Right cardiac atrium (tissue), 5 donors: ENCODE measurements at regions of chr16 and their contacts with region 1.

Region 1: DNA sequence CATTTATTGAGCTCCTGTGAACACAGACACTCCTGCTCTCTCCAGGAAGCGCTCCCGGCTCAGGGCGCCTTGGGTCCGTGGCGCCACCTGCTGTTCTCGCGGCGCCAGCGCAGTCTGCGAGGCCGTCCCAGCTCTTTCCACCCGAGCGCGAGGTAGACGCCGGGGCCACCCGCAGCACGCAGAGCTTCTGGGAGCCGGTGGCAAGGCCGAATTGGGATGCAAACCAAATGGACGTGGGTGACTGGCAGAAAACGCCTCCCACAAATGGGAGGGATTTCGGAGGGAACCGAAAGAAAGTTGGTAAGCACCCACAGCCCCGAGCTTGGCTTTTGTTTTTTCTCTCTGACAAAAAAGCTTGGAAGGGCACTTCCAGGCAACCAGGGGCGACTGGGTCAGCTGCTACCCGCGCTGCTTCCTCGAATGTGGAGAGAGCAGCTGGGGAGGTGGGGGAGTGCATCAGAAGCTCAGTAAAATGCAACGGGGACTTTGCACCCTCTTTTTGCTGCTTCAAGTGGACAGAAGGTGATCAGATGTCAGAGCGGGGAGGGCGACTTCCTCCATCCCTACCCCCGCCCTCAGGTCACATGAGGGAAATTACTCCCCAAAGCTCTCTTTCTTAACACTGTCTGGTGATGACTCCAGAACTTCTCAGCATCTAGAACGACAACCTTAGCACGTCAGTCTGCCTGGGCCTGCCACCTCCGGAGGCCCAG is 13.5 kb upstream of the N4BP1 start:
- DNase-seq: peak; percentile 83 to 94 (median 93)
- ATAC-seq: peak; percentile 95 to 96
- H3K4me3 ChIP-seq: peak overlapping the region; percentile 45
- H3K27ac ChIP-seq: peak overlapping the region; percentile 55
- H3K4me1 ChIP-seq: peaks cover 2% of the 10 kb centered on the region
- H3K27me3 ChIP-seq: no peaks in the 10 kb centered on the region

Region 2: GRCh38 chr16:48231727-48232492 is 391.6 kb before region 1 on chr16:
- intact Hi-C with region 1: loop called in 2 of 4 experiments (anchors 10 kb)
- DNase-seq: peak in 1 of 3 donors; percentile 50
- ATAC-seq: peak in 1 of 2 donors; percentile 55
- H3K4me3 ChIP-seq: no peak overlapping the region
- H3K27ac ChIP-seq: no peak overlapping the region
- H3K4me1 ChIP-seq: no peaks in the 10 kb centered on the region
- H3K27me3 ChIP-seq: no peaks in the 10 kb centered on the region

Region 3: DNA sequence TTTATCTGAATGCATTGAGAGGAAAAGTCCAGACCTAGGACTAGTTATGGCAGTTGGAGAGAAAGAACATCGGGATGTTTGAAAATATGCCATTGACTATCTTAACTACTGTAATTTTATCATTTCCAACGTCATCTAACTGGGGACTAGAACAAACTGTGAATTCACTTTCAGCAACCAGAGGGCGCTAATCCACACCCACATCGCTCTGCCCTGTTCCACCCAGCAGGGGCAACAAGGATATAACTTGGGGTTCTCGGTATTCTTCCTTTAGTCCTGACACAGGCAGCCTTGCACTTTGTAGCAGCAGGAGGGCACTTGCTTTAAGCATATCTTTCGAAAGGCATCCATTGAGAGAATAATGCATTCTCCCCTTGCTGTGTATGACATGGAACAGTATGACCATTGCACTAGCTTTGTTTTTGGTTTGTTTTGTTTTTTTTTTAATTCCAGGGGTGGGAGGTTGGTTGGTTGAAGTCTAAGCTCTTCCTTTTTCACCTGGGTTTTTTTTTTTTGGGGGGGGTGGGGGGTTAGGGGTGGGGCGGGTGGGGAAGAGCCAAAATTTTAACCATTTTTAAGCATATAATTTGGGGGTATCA is 269.8 kb before region 1 on chr16:
- intact Hi-C with region 1: loop called (anchors 5 to 10 kb)
- DNase-seq: peak in 2 of 3 donors; percentile 44 to 72
- ATAC-seq: peak; percentile 85 to 86
- H3K4me3 ChIP-seq: no peak overlapping the region
- H3K27ac ChIP-seq: peak overlapping the region; percentile 53
- H3K4me1 ChIP-seq: no peaks in the 10 kb centered on the region
- H3K27me3 ChIP-seq: no peaks in the 10 kb centered on the region

Region 4: DNA sequence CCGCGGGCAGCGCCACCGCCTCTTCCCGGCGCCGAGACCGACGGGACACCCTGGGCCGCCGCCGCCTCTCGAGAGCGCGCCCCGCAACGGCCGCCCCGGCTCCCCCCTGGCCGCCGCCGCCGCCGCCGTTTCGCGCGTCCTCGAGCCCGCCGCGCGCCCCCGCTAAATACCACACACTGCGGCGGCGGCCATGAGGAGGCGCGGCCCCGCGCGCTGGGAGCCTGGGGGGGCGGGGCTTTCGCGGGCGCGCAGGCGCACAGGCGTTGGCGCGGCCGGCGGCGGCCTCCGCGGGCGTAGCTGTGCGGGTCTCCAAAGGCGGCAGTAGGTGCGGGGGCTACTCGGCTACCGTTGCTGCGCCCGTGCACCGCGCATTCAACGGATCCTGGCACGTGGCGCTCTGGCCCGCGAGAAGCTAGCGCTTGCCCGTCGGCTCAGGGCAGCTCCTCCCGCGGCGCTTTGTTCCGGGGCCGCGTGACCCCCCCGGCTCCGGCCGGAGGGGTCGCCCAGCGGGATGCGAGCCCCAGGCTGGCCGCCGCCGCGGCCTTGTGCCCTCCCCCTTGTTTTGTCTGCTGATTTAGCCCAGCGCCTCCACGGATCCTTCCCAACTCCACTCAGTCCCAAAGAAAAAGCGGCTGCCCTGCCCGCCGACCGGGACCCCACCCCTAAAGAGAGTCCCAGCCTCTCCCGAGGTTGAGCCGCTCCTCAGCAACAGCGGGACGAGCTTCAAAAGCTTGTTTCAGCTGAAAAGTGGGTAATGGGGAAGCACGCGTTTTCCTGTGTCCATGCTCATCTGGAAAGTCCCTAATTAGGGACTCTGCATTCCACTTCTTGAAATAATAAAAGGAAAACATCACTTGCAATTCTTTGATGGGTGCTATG is 237.9 kb before region 1 on chr16 and contains the start of gene SIAH1:
- intact Hi-C with region 1: no loop called
- DNase-seq: peak; percentile 85 to 96 (median 95)
- ATAC-seq: peak; percentile 92 to 93
- H3K4me3 ChIP-seq: peak within 1 kb of the TSS; percentile 96
- H3K27ac ChIP-seq: peak within 1 kb of the TSS; percentile 97
- H3K4me1 ChIP-seq: peaks cover 8% of the 10 kb centered on the region
- H3K27me3 ChIP-seq: no peaks in the 10 kb centered on the region
- total RNA-seq, gene SIAH1: 14.4 to 17.9 (median 14.6) TPM

Region 5: DNA sequence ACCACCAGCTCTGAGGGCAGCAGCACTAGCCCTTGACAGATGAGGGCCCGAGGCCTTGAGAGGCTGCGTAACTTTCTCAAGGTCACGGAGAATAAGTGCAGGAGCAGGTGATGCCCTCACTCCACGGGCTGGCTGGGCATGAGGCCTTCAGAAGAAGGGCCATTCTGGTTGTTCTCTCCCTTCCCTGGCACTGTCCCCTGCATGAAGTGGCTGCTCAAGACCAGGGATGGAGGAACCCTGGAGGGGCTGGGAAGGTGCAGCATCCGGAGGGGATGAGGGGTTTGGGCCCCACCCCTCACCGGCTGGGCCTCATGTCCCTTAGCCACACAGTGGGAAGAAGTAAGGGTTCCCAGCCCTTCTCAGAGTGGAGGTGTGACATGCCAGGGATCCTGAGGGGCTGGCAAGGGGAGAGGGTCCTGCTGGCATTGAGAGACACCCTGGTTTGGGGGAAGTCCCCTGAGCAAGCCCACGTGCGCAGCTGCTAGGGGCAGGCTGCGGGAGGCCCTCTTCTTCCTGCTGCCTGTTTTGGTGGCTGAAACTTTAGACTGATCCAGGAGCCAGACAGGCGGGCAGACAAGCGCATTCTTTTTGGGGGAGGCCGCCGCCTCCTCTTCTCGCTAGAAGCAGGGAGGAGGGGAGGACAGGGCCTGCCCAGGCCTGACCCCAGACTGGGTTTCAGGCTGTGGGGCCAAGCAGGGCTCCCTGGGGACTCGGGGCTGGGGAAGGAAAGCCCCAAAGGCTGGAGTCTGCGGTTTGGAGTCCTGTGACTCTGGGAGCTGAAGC is 87.4 kb before region 1 on chr16:
- intact Hi-C with region 1: loop called in 1 of 4 experiments (anchors 5 kb)
- DNase-seq: peak; percentile 72 to 93 (median 89)
- ATAC-seq: peak; percentile 47 to 70
- H3K4me3 ChIP-seq: no peak overlapping the region
- H3K27ac ChIP-seq: peak overlapping the region; percentile 44
- H3K4me1 ChIP-seq: peaks cover 28% of the 10 kb centered on the region
- H3K27me3 ChIP-seq: no peaks in the 10 kb centered on the region

Region 6: GRCh38 chr16:48556913-48557351 is 66.5 kb before region 1 on chr16:
- intact Hi-C with region 1: loop called in 1 of 4 experiments (anchors 5 kb)
- DNase-seq: no peak
- ATAC-seq: peak; percentile 44 to 55
- H3K4me3 ChIP-seq: no peak overlapping the region
- H3K27ac ChIP-seq: no peak overlapping the region
- H3K4me1 ChIP-seq: peaks cover 14% of the 10 kb centered on the region
- H3K27me3 ChIP-seq: no peaks in the 10 kb centered on the region